Activated CD4-positive, alpha-beta memory T cell treated with anti-CD3 and anti-CD28 coated beads, Interleukin-2, amount 10 ng/mL, durations not matched to agents 7 days and 5 days (primary cell): ENCODE measurements at regions of chr16 and their contacts with region 1.

Region 1: GRCh38 chr16:66406534-66407221 is 20.4 kb upstream of the BEAN1 start:
- DNase-seq: peak; percentile 90
- H3K4me3 Mint-ChIP-seq: peak overlapping the region; percentile 77
- H3K27ac Mint-ChIP-seq: peak overlapping the region; percentile 38
- H3K4me1 Mint-ChIP-seq: peaks cover 31% of the 10 kb centered on the region
- H3K27me3 Mint-ChIP-seq: peaks cover 17% of the 10 kb centered on the region

Region 2: GRCh38 chr16:66483689-66484481 is 77.2 kb after region 1 on chr16:
- CTCF ChIA-PET with region 1: interaction called, 65 read pairs
- POLR2A ChIA-PET with region 1: interaction called, 3 read pairs
- DNase-seq: peak; percentile 80
- H3K4me3 Mint-ChIP-seq: no peak overlapping the region
- H3K27ac Mint-ChIP-seq: no peak overlapping the region
- H3K4me1 Mint-ChIP-seq: peaks cover 33% of the 10 kb centered on the region
- H3K27me3 Mint-ChIP-seq: no peaks in the 10 kb centered on the region

Region 3: GRCh38 chr16:66552286-66553177 is 145.9 kb after region 1 on chr16 and contains the start of gene CKLF:
- CTCF ChIA-PET with region 1: interaction called, 16 read pairs
- POLR2A ChIA-PET with region 1: interaction called, 11 read pairs
- DNase-seq: peak; percentile 94
- H3K4me3 Mint-ChIP-seq: peak within 1 kb of the TSS; percentile 98
- H3K27ac Mint-ChIP-seq: peak within 1 kb of the TSS; percentile 91
- H3K4me1 Mint-ChIP-seq: peaks cover 77% of the 10 kb centered on the region
- H3K27me3 Mint-ChIP-seq: no peaks in the 10 kb centered on the region
- total RNA-seq, gene CKLF: 183 to 188 TPM

Region 4: DNA sequence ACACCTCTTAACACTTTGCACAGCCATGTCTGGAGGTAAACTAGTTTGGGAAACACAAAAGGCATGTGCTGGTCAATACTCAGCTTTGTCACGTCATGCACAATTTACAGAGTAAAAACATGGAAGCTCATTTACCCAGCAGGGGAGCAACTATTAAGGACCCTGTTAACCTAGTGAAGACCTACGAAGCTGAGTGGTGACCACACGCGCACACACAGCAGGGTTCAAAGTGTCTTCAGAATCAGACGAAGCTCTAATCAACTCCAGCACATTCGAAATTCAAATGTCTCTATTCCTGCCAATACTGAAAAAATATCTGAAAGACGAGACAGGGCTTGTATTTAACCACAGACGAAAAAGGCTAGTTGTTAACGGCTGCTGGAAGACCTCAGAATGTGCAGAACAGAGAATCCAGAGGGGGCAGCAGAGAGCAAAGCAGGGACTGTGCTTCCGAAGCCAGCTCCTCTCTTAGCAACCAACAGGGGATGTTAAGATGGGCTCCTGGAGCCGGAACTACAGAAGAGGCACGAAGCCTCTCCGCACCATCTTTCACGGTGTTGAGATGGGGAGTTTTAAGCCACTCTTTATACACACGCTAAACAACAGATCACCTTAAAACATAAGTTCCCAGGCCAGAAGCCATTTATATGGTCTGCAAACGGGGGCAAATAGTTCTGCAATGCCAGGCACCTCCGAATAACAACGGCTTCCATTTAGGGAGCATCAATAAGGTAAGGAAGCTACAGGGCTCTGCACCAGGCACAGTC is 244.2 kb after region 1 on chr16:
- CTCF ChIA-PET with region 1: interaction called, 10 read pairs
- POLR2A ChIA-PET with region 1: no interaction called
- DNase-seq: peak; percentile 82
- H3K4me3 Mint-ChIP-seq: peak overlapping the region; percentile 38
- H3K27ac Mint-ChIP-seq: no peak overlapping the region
- H3K4me1 Mint-ChIP-seq: peaks cover 16% of the 10 kb centered on the region
- H3K27me3 Mint-ChIP-seq: peaks cover 6% of the 10 kb centered on the region